Activated naive CD8-positive, alpha-beta T cell treated with anti-CD3 and anti-CD28 coated beads, Interleukin-2, amount 10 ng/mL, durations not matched to agents 7 days and 5 days (primary cell): ENCODE measurements at regions of chr3 and their contacts with region 1.

Region 1: DNA sequence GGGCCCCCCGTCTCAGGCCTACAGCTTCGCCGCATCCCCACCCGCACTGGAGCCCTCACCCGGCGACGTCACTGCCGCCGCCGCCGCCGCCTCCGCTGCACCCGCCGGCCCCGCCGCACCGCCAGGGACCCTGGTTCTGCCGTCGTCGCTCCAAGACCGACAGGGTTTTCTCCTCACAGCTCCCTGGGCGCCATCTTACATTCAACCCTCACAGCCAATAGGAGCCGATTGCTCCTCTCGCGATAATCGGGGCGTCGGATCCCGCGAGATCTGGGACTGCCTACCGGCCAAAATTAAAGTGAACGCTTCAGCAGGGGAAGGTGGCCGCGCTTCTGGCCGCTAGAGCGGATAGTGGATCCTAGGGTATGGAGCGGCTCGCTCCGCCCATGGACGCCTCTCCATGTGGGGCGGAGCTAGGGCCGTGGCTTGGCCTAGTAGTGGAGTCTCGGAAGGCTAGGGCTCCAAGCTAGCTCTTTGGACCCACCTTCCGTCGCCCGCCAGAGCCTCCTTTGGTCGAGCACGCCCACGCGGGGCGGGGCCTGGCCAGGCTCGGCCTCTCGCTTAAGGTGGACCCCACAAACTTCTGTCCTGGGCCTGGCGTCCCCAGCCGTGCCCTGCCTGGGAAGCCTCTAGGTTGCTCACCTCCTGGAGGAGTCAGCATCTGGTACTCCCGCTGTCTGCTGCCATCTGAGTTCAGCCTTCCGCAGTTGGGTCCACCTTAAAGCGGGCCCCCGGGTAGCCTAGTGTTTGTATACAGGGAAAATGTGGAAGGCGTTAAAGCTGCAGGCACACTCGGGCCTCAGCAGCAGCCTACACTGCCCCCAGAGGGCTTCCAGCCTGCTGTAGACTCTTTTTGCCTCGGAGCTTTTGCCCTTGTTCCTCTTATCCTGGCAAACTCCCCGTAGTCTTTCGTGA is at the start of gene QRICH1:
- DNase-seq: peak; percentile 96
- ATAC-seq: peak; percentile 82
- H3K4me3 Mint-ChIP-seq: peak within 1 kb of the TSS; percentile 96
- H3K27ac Mint-ChIP-seq: peak within 1 kb of the TSS; percentile 97
- H3K4me1 Mint-ChIP-seq: peaks cover 19% of the 10 kb centered on the region
- H3K27me3 Mint-ChIP-seq: no peaks in the 10 kb centered on the region
- total RNA-seq, gene QRICH1: 141 to 153 TPM

Region 2: GRCh38 chr3:48989796-48990635 is 104.1 kb before region 1 on chr3 and contains the start of gene P4HTM:
- POLR2A ChIA-PET with region 1: interaction called, 11 read pairs
- DNase-seq: peak; percentile 84
- ATAC-seq: peak; percentile 81
- H3K4me3 Mint-ChIP-seq: peak within 1 kb of the TSS; percentile 88
- H3K27ac Mint-ChIP-seq: peak within 1 kb of the TSS; percentile 91
- H3K4me1 Mint-ChIP-seq: peaks cover 38% of the 10 kb centered on the region
- H3K27me3 Mint-ChIP-seq: no peaks in the 10 kb centered on the region
- total RNA-seq, gene P4HTM: 57.4 to 57.7 TPM

Region 3: GRCh38 chr3:49021813-49022687 is 72.1 kb before region 1 on chr3 and contains the start of gene NDUFAF3:
- POLR2A ChIA-PET with region 1: interaction called, 101 read pairs
- DNase-seq: peak; percentile 95
- ATAC-seq: peak; percentile 71
- H3K4me3 Mint-ChIP-seq: peak within 1 kb of the TSS; percentile 96
- H3K27ac Mint-ChIP-seq: peak within 1 kb of the TSS; percentile 98
- H3K4me1 Mint-ChIP-seq: peaks cover 31% of the 10 kb centered on the region
- H3K27me3 Mint-ChIP-seq: no peaks in the 10 kb centered on the region
- total RNA-seq, gene NDUFAF3: 78.9 to 82.4 TPM

Region 4: DNA sequence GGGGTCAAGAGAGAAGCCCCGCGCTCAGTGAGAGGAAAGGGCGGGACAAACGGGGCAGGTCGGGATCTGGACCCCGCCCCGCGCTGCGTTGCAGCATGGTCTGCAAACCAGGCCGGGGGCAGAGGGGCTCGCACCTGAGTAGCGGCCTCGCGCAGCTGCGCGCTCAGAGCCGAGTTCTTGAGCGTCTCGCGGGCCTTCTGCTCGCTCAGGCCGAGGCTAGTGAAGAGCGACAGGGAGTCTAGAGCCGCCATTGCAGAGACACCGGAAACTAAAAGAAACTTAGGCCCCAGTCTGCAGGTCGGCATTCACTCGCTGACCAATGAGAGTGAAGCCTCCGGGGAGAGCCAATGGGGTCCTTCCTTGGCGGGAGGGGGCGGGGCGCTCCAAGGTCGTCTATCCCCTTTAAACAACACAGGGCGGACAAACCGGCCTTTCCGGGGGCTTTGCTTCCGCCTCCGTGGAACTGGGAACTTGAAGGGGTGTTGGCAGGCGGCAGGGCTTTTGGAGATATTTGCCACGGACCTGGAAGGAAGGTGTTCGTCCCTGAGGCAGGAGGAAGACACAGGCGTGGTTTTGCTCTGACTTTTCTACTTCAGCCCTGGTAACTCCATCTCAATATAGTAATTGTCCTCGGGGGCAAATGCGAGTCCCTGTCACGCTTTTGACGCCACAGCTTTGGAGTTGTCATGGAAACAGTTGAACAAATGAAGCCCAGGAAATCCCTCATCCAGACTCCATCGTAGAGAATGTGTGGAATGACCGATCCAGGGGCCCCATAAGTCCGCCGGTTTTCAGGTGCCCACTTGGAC is 10.6 kb after region 1 on chr3 and contains the start of gene QARS1:
- POLR2A ChIA-PET with region 1: interaction called, 56 read pairs
- DNase-seq: peak; percentile 87
- ATAC-seq: peak; percentile 97
- H3K4me3 Mint-ChIP-seq: peak within 1 kb of the TSS; percentile 99
- H3K27ac Mint-ChIP-seq: peak within 1 kb of the TSS; percentile 98
- H3K4me1 Mint-ChIP-seq: peaks cover 23% of the 10 kb centered on the region
- H3K27me3 Mint-ChIP-seq: no peaks in the 10 kb centered on the region
- total RNA-seq, gene QARS1: 223 to 237 TPM

Region 5: DNA sequence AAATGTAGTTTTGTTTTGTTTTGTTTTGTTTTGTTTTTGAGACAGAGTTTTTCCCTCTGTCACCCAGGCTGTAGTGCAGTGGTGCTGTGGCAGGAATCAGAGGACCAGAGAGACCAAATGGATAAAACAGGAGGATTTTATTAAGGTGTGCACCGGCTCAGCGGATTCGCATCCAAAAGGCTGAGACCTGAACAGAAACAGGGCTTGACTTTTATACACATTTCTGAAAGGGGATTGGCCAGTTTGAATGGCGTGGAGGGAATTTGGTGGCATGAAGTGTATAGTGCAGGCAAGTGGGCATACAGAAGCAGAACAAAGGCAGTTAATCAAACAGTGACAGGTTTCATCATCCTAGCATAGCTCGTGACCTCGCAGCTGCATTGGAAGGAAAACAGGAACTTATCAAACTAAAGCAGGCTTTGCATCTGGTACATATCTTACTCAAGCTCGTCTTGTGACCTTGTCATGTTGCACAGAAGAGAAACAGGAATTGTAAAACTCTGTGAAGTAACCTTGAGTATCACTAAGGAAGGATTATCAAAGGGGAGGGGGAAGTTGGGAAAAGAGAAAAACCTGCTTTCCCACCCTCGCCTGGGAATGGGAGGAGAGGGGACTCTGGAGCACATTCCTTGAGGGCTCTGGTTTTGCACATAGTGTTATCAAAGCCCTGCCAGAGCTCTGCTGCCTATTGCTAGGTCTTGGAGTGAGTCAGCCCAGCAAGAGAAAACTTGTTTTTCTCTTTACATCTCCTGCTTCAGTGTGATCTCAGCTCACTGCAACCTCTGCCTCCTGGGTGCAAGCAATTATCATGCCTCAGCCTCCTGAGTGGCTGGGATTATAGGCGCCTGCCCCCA is 144.4 kb after region 1 on chr3:
- POLR2A ChIA-PET with region 1: no interaction called
- DNase-seq: no peak
- ATAC-seq: no peak
- H3K4me3 Mint-ChIP-seq: no peak overlapping the region
- H3K27ac Mint-ChIP-seq: no peak overlapping the region
- H3K4me1 Mint-ChIP-seq: peaks cover 4% of the 10 kb centered on the region
- H3K27me3 Mint-ChIP-seq: peaks cover 6% of the 10 kb centered on the region

Region 6: DNA sequence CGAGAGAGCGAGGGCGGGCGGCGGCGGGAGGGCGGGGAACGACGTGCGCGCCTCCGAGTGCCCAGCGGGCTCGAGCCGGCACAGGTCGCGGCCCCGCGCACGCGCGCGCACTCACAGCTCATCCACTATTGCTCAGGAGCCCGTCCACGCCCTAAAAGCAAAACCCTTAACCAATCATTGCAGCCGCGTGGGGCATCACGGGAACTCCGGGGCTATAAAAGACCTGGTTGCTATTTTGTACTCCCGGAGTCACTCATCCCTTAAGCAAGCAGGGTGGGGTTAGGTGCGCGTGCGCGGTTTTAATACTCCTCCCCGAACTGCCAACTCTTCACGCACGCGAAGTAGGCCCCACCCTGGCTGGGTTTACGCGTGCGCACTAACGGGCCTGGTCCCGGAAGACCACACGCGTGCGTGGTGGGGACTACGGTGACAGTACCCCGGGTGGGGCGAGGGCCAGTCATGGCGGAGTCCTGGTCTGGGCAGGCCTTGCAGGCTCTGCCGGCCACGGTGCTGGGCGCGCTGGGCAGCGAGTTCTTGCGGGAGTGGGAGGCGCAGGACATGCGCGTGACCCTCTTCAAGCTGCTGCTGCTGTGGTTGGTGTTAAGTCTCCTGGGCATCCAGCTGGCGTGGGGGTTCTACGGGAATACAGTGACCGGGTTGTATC is 318.0 kb after region 1 on chr3 and contains the starts of genes RHOA and TCTA:
- POLR2A ChIA-PET with region 1: interaction called, 12 read pairs
- DNase-seq: peak; percentile 97
- ATAC-seq: peak; percentile 82
- H3K4me3 Mint-ChIP-seq: peak within 1 kb of the TSS; percentile 94
- H3K27ac Mint-ChIP-seq: peak within 1 kb of the TSS; percentile 92
- H3K4me1 Mint-ChIP-seq: peaks cover 53% of the 10 kb centered on the region
- H3K27me3 Mint-ChIP-seq: no peaks in the 10 kb centered on the region
- total RNA-seq, gene RHOA: 428 to 441 TPM
- total RNA-seq, gene TCTA: 30.3 TPM